Right lobe of liver (tissue), 6 donors: ENCODE measurements at regions of chr19 and their contacts with region 1.

Region 1: DNA sequence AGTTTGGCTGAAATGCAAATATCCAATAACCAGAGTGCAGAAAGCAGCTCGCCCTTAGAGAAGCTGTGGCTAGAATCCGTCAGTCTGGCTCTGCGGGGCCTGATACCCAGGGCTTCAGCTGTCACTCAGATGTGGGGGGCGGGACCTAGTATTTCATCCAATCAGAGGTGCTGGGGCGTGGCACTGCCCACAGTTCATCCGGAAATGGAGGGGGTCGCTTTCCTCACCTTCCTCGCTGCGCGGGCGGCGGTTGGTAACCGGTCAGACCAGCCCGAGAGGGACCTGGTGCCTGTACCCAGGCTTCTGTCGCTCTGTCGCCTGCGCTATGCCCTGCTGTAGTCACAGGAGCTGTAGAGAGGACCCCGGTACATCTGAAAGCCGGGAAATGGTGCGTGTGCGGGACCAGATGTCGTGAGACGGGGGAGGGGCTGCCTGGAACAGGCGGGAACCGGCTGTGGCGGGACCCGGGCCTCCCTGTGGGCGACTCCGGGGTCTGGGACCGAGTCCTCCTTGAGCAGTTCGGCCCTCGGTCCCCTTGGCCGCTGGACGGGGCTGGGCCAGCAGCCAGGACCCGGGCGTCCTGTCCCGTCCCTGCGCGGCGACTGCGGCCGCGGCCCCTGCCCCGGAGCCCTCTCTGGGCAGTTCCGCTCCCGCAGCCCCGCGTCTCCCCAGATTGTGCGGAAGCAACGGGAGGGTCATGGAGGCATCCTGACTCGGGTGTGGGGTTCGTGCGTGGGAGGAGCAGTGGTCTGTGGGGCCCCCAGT is at the start of gene ZNF700:
- DNase-seq: peak; percentile 92 to 97 (median 95)
- ATAC-seq: peak; percentile 95 to 98 (median 96)
- H3K4me3 ChIP-seq: peak within 1 kb of the TSS; percentile 72 to 99 (median 98)
- H3K27ac ChIP-seq: peak within 1 kb of the TSS; percentile 90 to 95 (median 92)
- H3K4me1 ChIP-seq: peaks cover 0 to 12% (median 4%) of the 10 kb centered on the region in 4 donors
- H3K27me3 ChIP-seq: no peaks in the 10 kb centered on the region
- CTCF ChIP-seq: no peak
- POLR2A ChIP-seq: peak; percentile 90
- total RNA-seq, gene ZNF700: 5.1 to 7.6 (median 5.5) TPM

Region 2: DNA sequence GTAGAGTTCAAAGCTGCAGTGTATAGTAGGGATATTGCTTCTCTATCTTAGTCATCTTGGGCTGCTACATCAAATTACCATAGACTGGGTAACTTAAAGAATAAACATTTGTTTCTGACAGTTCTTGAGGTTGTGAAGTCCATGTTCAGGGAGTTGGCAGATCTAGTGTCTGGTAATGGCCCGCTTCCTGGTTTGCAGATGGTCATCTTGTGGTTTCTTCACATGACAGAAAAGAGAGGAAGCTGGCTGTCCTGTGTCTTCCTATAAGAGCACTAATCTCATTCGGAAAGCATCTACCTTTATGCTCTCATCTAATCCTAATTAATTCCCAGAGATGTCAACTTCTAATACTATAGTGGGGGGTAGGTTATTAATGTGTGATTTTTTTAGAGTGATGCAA is 46.0 kb after region 1 on chr19:
- intact Hi-C with region 1: loop called in 1 of 2 experiments (anchors 10 kb)
- DNase-seq: no peak
- ATAC-seq: peak in 2 of 4 donors; percentile 28 to 44
- H3K4me3 ChIP-seq: no peak overlapping the region
- H3K27ac ChIP-seq: no peak overlapping the region
- H3K4me1 ChIP-seq: no peaks in the 10 kb centered on the region
- H3K27me3 ChIP-seq: no peaks in the 10 kb centered on the region
- CTCF ChIP-seq: no peak
- POLR2A ChIP-seq: no peak

Region 3: DNA sequence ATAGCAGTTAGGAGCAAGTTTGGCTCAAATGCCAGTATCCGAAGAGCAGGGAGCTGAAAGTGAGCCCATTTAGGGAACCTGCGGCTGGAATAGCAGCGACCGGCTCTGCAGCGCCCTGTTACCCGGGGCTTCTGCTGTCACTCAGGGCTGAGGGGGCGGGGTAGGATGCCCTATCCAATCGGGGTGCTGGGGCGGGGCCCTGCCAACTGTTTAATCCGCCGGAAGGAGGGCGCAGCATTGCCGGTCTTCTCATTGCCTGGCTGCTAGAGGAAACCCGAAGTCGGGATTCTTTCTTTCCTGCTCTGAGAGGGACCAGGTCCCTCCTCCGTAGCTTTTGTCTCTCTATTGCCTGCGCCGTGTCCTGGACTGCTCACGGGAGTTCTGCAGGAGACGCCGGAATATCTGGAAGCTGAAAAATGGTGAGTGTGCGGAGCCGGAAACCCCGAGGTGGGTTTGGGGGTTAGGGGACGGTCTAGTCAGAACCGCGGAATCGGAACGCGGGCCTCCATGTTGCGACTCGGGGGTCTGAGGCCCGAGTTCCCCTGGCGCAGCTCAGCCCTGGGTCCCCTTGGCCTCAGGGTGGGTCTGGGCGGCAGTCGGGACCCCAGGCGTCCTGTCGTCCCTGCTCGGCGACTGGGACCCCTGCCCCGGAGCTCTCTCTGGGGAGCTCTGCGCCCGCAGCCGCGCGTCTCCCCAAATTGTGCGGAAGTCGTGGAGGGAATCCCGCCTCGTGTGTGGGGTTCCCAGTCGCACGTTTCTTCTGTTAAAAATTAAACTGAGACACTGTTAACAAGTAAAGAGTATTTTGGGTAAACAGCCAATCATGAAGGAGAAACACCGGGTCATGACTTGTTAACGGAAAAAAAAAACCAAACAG is 62.6 kb after region 1 on chr19:
- intact Hi-C with region 1: no loop called
- DNase-seq: peak; percentile 94 to 97 (median 97)
- ATAC-seq: peak; percentile 99
- H3K4me3 ChIP-seq: peak overlapping the region; percentile 74 to 91 (median 79)
- H3K27ac ChIP-seq: peak overlapping the region; percentile 77 to 81 (median 78)
- H3K4me1 ChIP-seq: no peaks in the 10 kb centered on the region
- H3K27me3 ChIP-seq: no peaks in the 10 kb centered on the region
- CTCF ChIP-seq: no peak
- POLR2A ChIP-seq: peak; percentile 72